Mammary epithelial cell (primary cell): ENCODE measurements at regions of chr2 and their contacts with region 1.

Region 1: DNA sequence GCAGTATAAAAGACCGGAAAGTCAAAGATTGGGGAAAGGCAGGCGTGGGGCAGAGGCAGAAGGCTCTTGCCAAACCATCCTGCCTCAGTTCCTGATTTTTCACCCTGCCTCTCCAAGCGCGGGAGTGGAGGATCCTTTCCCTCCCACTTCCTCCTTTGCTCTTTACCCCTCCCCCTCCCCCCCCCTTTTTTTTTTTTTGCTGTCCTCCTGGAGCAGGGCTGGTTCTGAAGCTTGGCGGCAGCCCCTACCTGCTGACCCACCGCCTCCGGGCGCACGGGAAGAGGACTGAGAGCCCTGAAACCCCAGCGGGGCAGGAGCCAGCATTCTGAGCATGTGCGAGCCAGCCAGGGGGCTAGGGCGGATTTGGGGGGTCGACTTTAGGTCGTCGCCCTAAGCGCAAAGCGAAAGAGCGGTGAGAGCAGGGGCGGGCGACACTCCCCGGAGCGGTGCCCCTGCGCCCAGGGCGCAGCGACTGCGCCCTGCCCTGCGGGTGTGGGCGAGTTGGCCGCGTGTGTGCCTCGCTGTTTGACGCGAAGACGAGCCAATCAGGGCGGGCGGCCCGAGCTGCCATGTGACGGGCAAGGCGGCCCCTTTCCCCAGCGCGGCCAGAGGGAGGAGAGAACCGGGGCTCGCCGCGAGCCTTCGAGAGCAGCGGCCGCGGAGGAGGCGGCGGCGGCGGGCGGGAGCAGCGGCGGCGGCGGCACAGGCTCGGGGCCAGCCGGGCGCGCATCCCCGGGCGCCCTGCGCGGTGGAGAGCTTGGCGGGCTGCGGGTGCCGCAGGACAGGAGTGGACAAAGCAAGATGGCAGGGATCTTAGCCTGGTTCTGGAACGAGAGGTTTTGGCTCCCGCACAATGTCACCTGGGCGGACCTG is at the start of gene CERS6:
- DNase-seq: peak; percentile 95
- H3K4me3 ChIP-seq: peak within 1 kb of the TSS; percentile 89 to 94 (median 90)
- H3K27ac ChIP-seq: peak within 1 kb of the TSS; percentile 79
- H3K4me1 ChIP-seq: peaks cover 20% of the 10 kb centered on the region
- H3K27me3 ChIP-seq: no peaks in the 10 kb centered on the region
- CTCF ChIP-seq: no peak
- total RNA-seq, gene CERS6: 34.9 to 74.5 TPM

Region 2: DNA sequence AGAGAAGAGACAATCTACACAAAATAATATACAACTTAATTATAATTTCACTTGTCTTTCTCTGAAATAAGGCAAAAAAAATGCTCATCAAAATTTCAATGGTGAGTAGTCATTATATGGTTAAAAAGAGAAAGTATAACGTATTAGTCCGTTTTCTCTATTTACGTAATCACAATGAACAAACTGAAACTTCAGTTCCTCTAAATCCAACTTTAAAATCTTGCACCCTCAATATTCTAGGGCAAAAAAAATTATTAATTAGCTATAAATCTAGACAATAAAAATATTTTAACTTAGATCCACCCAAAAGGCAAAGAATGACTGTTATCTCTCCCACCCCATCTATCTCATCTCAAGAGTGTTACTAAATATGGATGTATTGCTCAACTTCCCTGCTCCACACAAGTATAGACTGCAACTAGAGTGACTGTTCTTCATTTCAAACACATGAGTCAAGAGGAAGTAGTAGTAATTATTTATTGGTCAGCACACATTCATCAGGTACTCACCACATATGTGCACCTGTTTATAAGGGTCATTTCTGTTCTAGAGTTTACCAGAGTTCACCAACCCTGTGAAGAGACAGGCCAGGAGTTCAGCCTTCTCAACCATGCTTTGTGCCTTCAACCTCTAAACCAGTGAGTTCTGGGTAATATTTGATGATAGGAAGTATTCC is 244.9 kb before region 1 on chr2:
- CTCF ChIA-PET with region 1: no interaction called
- dilution Hi-C with region 1: no loop called
- in situ Hi-C with region 1: no loop called
- intact Hi-C with region 1: no loop called
- DNase-seq: peak; percentile 95
- H3K4me3 ChIP-seq: peak overlapping the region; percentile 2 to 52 (median 49)
- H3K27ac ChIP-seq: peak overlapping the region; percentile 76
- H3K4me1 ChIP-seq: peaks cover 42% of the 10 kb centered on the region
- H3K27me3 ChIP-seq: no peaks in the 10 kb centered on the region
- CTCF ChIP-seq: no peak

Region 3: GRCh38 chr2:168490015-168490874 is 34.4 kb after region 1 on chr2:
- CTCF ChIA-PET with region 1: no interaction called
- dilution Hi-C with region 1: no loop called
- in situ Hi-C with region 1: no loop called
- intact Hi-C with region 1: loop called (anchors 2 kb)
- DNase-seq: peak; percentile 48
- H3K4me3 ChIP-seq: no peak overlapping the region
- H3K27ac ChIP-seq: no peak overlapping the region
- H3K4me1 ChIP-seq: peaks cover 12% of the 10 kb centered on the region
- H3K27me3 ChIP-seq: no peaks in the 10 kb centered on the region
- CTCF ChIP-seq: no peak

Region 4: GRCh38 chr2:168521053-168521741 is 65.3 kb after region 1 on chr2:
- CTCF ChIA-PET with region 1: interaction called, 5 read pairs
- dilution Hi-C with region 1: loop called (anchors 5 kb)
- in situ Hi-C with region 1: no loop called
- intact Hi-C with region 1: loop called (anchors 2 kb)
- DNase-seq: no peak
- H3K4me3 ChIP-seq: no peak overlapping the region
- H3K27ac ChIP-seq: peak overlapping the region; percentile 6
- H3K4me1 ChIP-seq: peaks cover 63% of the 10 kb centered on the region
- H3K27me3 ChIP-seq: no peaks in the 10 kb centered on the region
- CTCF ChIP-seq: no peak

Region 5: GRCh38 chr2:168565112-168565511 is 109.2 kb after region 1 on chr2:
- CTCF ChIA-PET with region 1: no interaction called
- dilution Hi-C with region 1: no loop called
- in situ Hi-C with region 1: no loop called
- intact Hi-C with region 1: loop called (anchors 5 kb)
- DNase-seq: peak; percentile 92
- H3K4me3 ChIP-seq: no peak overlapping the region
- H3K27ac ChIP-seq: peak overlapping the region; percentile 62
- H3K4me1 ChIP-seq: peaks cover 24% of the 10 kb centered on the region
- H3K27me3 ChIP-seq: no peaks in the 10 kb centered on the region
- CTCF ChIP-seq: no peak

Region 6: GRCh38 chr2:168614172-168615018 is 158.5 kb after region 1 on chr2:
- CTCF ChIA-PET with region 1: no interaction called
- dilution Hi-C with region 1: no loop called
- in situ Hi-C with region 1: no loop called
- intact Hi-C with region 1: loop called (anchors 1 kb)
- DNase-seq: peak; percentile 96
- H3K4me3 ChIP-seq: no peak overlapping the region
- H3K27ac ChIP-seq: peak overlapping the region; percentile 84
- H3K4me1 ChIP-seq: peaks cover 27% of the 10 kb centered on the region
- H3K27me3 ChIP-seq: no peaks in the 10 kb centered on the region
- CTCF ChIP-seq: peak; percentile 39 to 42

Region 7: GRCh38 chr2:168671932-168672331 is 216.0 kb after region 1 on chr2:
- CTCF ChIA-PET with region 1: no interaction called
- dilution Hi-C with region 1: no loop called
- in situ Hi-C with region 1: no loop called
- intact Hi-C with region 1: no loop called
- DNase-seq: peak; percentile 68
- H3K4me3 ChIP-seq: no peak overlapping the region
- H3K27ac ChIP-seq: no peak overlapping the region
- H3K4me1 ChIP-seq: peaks cover under 1% of the 10 kb centered on the region
- H3K27me3 ChIP-seq: no peaks in the 10 kb centered on the region
- CTCF ChIP-seq: no peak

Region 8: DNA sequence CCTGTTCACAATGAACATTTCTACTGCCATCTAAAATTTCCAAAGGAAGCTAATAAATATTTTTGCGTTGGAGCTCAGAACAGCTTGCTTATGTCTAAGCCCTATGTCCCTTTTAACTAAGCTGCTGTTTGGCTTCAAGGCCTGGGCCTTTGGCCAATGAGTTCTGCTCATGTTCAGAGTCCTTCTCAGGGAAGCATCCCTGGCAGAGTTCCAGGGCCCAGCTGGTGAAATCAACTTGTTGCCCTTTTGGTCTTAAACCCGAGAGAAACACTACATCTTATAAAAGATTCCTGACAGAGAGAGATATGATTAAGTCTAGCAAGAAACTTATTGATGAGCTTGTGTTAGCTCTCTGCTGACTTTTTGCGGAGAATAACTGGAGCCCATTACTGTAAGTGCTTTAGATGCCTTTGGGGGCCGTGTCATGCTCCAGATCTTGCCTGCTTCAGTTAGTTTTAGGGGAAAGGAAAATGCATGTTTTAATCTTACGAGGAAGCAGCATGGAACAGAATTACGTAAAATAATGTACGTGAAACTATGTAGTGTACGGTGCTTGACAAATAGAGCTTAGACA is 244.0 kb after region 1 on chr2:
- CTCF ChIA-PET with region 1: no interaction called
- dilution Hi-C with region 1: no loop called
- in situ Hi-C with region 1: no loop called
- intact Hi-C with region 1: loop called (anchors 2 kb)
- DNase-seq: no peak
- H3K4me3 ChIP-seq: no peak overlapping the region
- H3K27ac ChIP-seq: no peak overlapping the region
- H3K4me1 ChIP-seq: peaks cover 17% of the 10 kb centered on the region
- H3K27me3 ChIP-seq: no peaks in the 10 kb centered on the region
- CTCF ChIP-seq: no peak

Region 9: DNA sequence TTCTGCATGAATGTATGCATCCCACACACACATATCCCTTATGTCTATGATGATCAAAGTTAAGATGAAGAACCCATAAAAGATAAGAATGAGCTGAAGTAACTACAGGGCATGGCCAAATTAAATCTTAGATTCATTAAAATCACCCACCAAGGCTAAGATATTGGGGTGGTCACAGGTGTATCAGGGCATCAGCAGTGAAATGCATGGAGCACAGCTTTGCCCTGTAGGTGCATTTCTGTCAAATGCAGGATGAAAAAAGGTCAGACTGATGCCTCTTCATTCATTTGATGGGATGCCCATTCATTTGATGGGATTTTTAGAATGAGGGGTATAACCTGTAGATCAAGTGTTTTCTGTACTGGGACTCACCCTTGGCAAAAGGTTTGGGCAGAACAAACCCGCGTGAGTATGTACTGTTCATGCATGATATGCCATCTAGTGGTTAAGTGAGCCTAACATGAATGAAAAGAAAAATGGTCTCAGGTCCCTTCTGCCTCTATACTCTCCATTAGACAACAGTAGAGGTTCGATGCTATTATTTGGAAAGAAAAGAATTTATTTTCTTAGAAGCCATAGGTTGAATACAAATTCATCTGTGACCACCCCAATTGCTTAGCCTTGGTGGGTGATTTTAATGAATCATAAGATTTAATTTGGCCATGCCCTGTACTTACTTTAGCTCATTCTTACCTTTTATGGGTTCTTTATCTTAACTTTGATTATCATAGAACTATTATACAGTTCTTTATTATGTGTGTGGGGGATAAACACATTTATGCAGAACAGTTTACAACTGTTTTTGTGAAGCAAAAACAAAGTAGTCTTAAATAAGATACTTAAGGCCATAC is 303.3 kb after region 1 on chr2:
- CTCF ChIA-PET with region 1: no interaction called
- dilution Hi-C with region 1: no loop called
- in situ Hi-C with region 1: no loop called
- intact Hi-C with region 1: loop called (anchors 2 kb)
- DNase-seq: peak; percentile 45
- H3K4me3 ChIP-seq: no peak overlapping the region
- H3K27ac ChIP-seq: no peak overlapping the region
- H3K4me1 ChIP-seq: no peaks in the 10 kb centered on the region
- H3K27me3 ChIP-seq: no peaks in the 10 kb centered on the region
- CTCF ChIP-seq: peak; percentile 58 to 65

Region 10: GRCh38 chr2:168912901-168913369 is 457.1 kb after region 1 on chr2:
- CTCF ChIA-PET with region 1: no interaction called
- dilution Hi-C with region 1: no loop called
- in situ Hi-C with region 1: no loop called
- intact Hi-C with region 1: no loop called
- DNase-seq: no peak
- H3K4me3 ChIP-seq: peak overlapping the region in 2 of 3 experiments; percentile 22 to 28
- H3K27ac ChIP-seq: no peak overlapping the region
- H3K4me1 ChIP-seq: no peaks in the 10 kb centered on the region
- H3K27me3 ChIP-seq: peaks cover 1% of the 10 kb centered on the region
- CTCF ChIP-seq: no peak